WTC11 (cell line): ENCODE measurements at regions of chr2 and their contacts with region 1.

Region 1: GRCh38 chr2:21422050-21422449 is 298.3 kb downstream of the TDRD15 start:
- DNase-seq: peak; percentile 90
- ATAC-seq: peak; percentile 97
- H3K4me3 Mint-ChIP-seq: no peak overlapping the region
- H3K27ac Mint-ChIP-seq: no peak overlapping the region
- H3K4me1 Mint-ChIP-seq: peaks cover 11% of the 10 kb centered on the region
- H3K27me3 Mint-ChIP-seq: no peaks in the 10 kb centered on the region
- CTCF ChIP-seq: peak; percentile 83

Region 2: DNA sequence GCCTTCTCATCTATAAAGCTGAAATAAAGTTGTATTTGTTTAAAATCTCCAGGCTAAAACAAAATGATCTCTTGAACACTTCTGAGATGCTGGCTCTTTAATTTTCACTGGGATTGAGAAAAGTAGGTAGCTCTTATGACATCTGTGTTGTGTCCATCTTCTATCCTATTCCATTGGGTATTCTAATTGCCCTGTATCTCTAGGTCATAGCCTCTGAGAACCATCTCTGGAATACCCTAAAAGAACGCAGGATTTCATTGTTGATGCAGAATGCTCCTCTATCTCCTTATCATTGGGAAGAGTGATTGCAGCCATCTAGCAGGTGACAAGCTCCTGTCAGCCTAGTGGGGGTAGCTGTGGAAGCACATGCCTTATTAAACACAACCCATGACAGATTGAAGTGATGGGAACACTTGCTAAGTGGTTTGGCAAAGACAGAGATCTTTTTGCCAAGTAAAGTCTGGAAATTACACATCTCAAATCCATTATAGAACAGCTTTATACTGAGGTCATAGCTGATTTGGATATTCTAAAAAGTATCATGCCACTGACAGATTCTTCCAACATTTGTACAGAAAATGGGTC is 120.1 kb before region 1 on chr2:
- CTCF ChIA-PET with region 1: no interaction called
- POLR2A ChIA-PET with region 1: no interaction called
- DNase-seq: no peak
- ATAC-seq: no peak
- H3K4me3 Mint-ChIP-seq: no peak overlapping the region
- H3K27ac Mint-ChIP-seq: no peak overlapping the region
- H3K4me1 Mint-ChIP-seq: no peaks in the 10 kb centered on the region
- H3K27me3 Mint-ChIP-seq: no peaks in the 10 kb centered on the region; the same call in 1 of the 2 replicates
- CTCF ChIP-seq: no peak

Region 3: DNA sequence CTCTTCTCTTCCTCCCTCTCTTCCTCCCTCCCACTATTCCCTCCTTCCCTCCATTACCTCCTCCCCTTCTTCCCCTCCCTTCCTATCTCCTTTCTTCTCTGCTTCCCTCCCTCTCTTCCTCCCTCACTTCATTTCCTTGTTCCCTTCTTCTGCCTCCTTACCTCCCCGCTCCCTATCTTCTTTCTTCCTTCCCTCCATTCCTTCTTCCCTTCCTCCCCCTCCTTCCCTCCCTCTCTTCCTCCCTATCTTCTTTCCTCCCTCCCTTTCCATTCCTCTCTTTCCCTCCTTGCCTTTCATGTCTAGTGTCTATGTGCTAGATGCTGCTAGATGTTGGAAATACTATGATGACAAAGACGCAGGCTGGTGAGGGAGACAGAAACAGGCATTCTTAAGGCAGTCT is 52.3 kb before region 1 on chr2:
- CTCF ChIA-PET with region 1: no interaction called
- POLR2A ChIA-PET with region 1: no interaction called
- DNase-seq: no peak
- ATAC-seq: no peak
- H3K4me3 Mint-ChIP-seq: no peak overlapping the region
- H3K27ac Mint-ChIP-seq: no peak overlapping the region
- H3K4me1 Mint-ChIP-seq: peaks cover 9% of the 10 kb centered on the region
- H3K27me3 Mint-ChIP-seq: no peaks in the 10 kb centered on the region
- CTCF ChIP-seq: no peak

Region 4: GRCh38 chr2:21452678-21453077 is 30.6 kb after region 1 on chr2:
- CTCF ChIA-PET with region 1: interaction called, 12 read pairs
- POLR2A ChIA-PET with region 1: no interaction called
- DNase-seq: no peak
- ATAC-seq: peak; percentile 65
- H3K4me3 Mint-ChIP-seq: no peak overlapping the region
- H3K27ac Mint-ChIP-seq: no peak overlapping the region
- H3K4me1 Mint-ChIP-seq: peaks cover 56% of the 10 kb centered on the region
- H3K27me3 Mint-ChIP-seq: peaks cover 3% of the 10 kb centered on the region
- CTCF ChIP-seq: no peak

Region 5: GRCh38 chr2:21467910-21468309 is 45.9 kb after region 1 on chr2:
- CTCF ChIA-PET with region 1: interaction called, 10 read pairs
- POLR2A ChIA-PET with region 1: no interaction called
- DNase-seq: no peak
- ATAC-seq: peak; percentile 75
- H3K4me3 Mint-ChIP-seq: no peak overlapping the region
- H3K27ac Mint-ChIP-seq: no peak overlapping the region; the same call in 1 of the 2 replicates
- H3K4me1 Mint-ChIP-seq: peaks cover 28% of the 10 kb centered on the region
- H3K27me3 Mint-ChIP-seq: no peaks in the 10 kb centered on the region
- CTCF ChIP-seq: no peak